ENCODE measurements at regions of chr12 and their contacts with region 1.

Region 1: DNA sequence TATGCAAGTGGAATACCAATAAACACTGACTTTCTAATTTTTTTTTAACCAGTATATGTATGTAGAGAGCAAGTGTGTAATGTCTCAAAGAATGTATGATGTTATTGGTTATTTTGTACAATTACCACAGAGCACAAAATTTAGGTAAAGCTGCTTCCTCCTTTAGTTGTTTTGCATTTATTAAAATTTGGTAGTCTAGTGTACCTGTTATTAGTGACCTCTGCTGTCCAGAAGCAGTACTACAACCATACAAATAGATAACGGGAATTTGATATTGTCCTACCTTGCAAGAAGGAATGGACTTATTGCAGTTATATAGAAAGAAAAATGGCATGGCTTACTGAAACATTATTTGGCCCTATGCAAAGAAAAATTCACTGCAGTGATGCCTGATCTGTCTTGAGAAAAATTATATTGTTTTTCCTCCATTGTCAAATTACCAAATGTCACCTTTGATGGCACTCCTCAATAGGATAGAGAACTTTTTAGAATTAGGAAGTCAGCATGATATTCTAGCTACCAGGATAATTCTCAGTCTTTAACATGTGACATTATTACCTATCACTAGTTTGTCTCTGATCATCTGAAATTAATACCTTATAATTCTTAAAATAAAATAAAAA is 153.9 kb upstream of the RMST start:
- ATAC-seq: no peak
- H3K4me3 ChIP-seq: no peak overlapping the region
- H3K27ac ChIP-seq: no peak overlapping the region
- H3K4me1 ChIP-seq: peaks cover 24 to 27% of the 10 kb centered on the region in 2 donors

Region 2: DNA sequence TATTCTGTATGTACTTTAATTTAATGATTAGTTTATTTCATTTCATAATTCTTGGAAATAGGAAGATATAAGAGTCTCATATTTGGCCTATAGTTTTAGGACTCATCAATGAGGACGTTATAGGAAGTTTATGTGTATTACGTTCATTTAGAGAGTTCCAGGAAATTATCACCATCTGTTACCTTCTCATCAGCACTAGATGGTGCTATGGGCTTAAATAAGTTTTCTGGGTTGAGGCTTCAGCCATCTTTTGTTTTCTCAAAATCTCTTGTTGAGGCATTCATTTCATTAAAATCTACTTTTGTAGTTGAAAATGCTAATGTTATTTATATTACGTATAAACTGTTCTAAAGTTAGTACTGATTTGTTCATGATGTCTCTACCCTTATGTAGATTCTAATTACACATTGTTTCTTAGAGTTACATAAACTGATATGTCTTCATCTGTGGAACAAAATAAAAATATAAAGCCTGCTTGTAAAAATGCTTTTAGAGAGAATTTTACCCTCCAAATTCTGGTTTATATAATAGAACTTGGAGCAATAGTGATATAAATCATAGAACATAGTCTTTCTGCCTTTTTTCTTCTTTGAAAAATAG is 730.1 kb before region 1 on chr12:
- in situ Hi-C with region 1: loop called in 1 of 9 experiments (anchors 25 kb)
- ATAC-seq: peak in 6 of 8 experiments; percentile 41 to 85 (median 62)
- H3K4me3 ChIP-seq: no peak overlapping the region
- H3K27ac ChIP-seq: no peak overlapping the region
- H3K4me1 ChIP-seq: peaks cover 5 to 10% of the 10 kb centered on the region in 2 donors

Region 3: GRCh38 chr12:97148941-97149559 is 159.6 kb before region 1 on chr12:
- in situ Hi-C with region 1: loop called in 1 of 9 experiments (anchors 25 kb)
- ATAC-seq: peak in 7 of 8 experiments; percentile 50 to 100 (median 89)
- H3K4me3 ChIP-seq: no peak overlapping the region
- H3K27ac ChIP-seq: no peak overlapping the region
- H3K4me1 ChIP-seq: peaks cover 4 to 6% of the 10 kb centered on the region in 2 donors

Measured in motor neuron (in vitro differentiated cells).